Right ventricle myocardium superior (tissue), 1 donor: ENCODE measurements at regions of chr5 and their contacts with region 1.

Region 1: DNA sequence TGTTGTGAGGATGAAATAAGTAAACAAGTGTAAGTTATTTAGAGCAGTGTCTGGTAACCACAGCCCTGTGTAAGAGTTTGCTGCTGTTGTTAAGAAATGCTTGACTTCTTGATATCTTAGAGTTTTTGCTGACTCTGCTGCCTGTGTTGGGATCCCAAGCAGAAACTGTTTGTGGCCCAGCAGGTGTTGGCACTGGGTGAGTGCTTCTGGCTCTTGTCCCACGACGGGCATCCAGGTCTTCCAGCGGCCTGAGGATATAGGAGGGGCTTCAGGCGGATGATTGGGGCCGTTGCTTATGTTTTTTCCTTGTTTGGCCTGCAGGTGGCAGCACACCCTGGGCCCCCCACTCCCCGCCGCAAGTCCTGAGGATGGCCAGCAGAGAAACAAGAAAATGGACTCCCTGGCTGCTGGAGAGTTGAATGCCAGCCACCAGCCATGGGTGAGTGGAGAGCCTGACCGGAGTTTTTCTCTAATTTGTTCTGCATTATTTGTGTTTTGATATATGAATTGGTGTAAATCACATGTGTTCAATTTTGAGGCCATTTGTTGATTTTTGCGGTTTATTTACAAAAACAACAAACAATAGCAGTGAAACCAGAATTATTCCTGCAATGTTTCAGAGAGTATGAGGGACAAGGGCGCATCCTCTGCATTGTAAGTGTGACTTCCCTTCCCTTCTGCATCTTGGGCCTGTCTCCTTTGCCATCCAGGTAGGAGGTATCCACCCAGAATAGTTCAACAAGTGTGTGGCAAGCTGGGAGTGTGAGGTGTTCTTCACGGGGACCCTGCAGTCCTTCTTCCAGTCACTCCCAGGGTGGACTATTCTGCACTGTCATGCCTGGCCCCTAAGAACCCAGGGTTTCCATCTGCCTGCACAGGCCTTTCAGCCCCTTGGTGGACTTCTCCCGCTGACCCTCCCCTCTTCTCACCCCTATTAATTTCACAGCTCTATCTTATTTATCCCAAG is 50.3 kb downstream of the SLC22A5 start:
- DNase-seq: peak; percentile 80
- ATAC-seq: peak; percentile 63

Region 2: GRCh38 chr5:132489871-132490485 is 70.2 kb after region 1 on chr5:
- intact Hi-C with region 1: loop called (anchors 5 kb)
- DNase-seq: peak; percentile 83
- ATAC-seq: peak; percentile 55